Mammary epithelial cell (primary cell): ENCODE measurements at regions of chr6 and their contacts with region 1.

Region 1: DNA sequence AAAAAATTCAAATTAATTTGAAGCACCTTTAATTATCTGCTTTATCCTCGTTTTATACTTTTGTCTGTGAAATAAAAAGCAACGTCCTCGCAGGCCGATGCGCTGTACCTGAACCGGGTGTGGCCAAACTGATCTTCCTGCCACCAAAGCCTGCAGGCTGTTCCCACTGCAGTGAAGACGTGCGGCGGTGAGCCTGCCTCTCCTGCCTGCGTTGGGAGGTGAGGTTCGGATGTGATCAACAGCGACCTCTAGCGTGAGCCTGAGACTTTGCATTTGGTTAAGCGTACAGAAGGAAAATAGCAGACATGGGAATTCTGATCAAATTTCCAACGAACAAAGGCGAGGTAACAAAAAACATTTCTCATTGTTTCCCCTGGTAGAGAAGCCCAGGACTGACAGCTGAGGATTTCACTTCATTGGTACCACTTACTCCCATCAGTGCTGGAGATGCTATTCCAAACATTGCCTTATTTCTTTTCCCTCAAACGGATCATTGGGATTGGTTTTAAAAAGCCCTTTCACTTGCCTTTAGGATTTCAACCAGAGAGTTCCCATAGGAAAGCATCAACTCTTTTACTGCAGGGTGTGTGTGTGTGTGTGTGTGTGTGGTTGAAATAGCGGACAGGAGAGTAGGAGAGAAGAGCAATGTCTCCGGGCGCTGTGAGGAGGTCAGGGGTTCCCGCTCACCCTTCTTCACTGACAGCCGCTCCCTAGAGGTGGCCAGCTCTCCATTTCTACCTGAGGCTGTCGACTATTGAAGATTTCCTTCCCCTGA is 56.6 kb upstream of the CCN6 start:
- DNase-seq: peak; percentile 73
- H3K4me3 ChIP-seq: no peak overlapping the region
- H3K27ac ChIP-seq: no peak overlapping the region
- H3K4me1 ChIP-seq: peaks cover 30% of the 10 kb centered on the region
- H3K27me3 ChIP-seq: no peaks in the 10 kb centered on the region
- CTCF ChIP-seq: peak; percentile 86 to 89

Region 2: GRCh38 chr6:111047244-111047643 is 950.0 kb before region 1 on chr6:
- CTCF ChIA-PET with region 1: no interaction called
- dilution Hi-C with region 1: no loop called
- in situ Hi-C with region 1: no loop called
- intact Hi-C with region 1: no loop called
- DNase-seq: no peak
- H3K4me3 ChIP-seq: no peak overlapping the region
- H3K27ac ChIP-seq: no peak overlapping the region
- H3K4me1 ChIP-seq: no peaks in the 10 kb centered on the region
- H3K27me3 ChIP-seq: no peaks in the 10 kb centered on the region
- CTCF ChIP-seq: no peak

Region 3: DNA sequence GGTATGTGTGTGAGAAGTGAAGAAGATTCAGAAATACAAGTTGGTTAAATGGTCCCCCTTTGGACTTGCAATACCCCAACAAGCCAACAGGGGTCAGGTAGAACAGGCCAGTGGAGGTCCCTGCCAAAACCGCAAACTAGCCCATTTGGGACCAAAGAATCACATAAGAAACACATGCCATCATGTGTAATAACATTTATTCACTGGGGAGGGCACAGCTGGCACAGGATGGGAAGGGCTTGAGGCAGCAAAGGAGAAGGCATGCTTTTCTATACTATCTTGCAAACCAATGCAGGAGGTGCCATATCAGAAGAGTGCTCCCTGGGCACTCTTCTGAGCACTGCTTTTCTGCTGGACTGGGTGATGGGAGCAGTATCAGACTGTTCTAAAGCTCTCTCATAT is 275.5 kb before region 1 on chr6:
- CTCF ChIA-PET with region 1: no interaction called
- dilution Hi-C with region 1: no loop called
- in situ Hi-C with region 1: no loop called
- intact Hi-C with region 1: loop called (anchors 1 kb)
- DNase-seq: no peak
- H3K4me3 ChIP-seq: no peak overlapping the region
- H3K27ac ChIP-seq: no peak overlapping the region
- H3K4me1 ChIP-seq: peaks cover 6% of the 10 kb centered on the region
- H3K27me3 ChIP-seq: no peaks in the 10 kb centered on the region
- CTCF ChIP-seq: peak; percentile 65 to 72

Region 4: GRCh38 chr6:111861431-111861885 is 135.8 kb before region 1 on chr6:
- CTCF ChIA-PET with region 1: no interaction called
- dilution Hi-C with region 1: loop called (anchors 10 kb)
- in situ Hi-C with region 1: no loop called
- intact Hi-C with region 1: no loop called
- DNase-seq: no peak
- H3K4me3 ChIP-seq: no peak overlapping the region
- H3K27ac ChIP-seq: no peak overlapping the region
- H3K4me1 ChIP-seq: no peaks in the 10 kb centered on the region
- H3K27me3 ChIP-seq: no peaks in the 10 kb centered on the region
- CTCF ChIP-seq: no peak

Region 5: DNA sequence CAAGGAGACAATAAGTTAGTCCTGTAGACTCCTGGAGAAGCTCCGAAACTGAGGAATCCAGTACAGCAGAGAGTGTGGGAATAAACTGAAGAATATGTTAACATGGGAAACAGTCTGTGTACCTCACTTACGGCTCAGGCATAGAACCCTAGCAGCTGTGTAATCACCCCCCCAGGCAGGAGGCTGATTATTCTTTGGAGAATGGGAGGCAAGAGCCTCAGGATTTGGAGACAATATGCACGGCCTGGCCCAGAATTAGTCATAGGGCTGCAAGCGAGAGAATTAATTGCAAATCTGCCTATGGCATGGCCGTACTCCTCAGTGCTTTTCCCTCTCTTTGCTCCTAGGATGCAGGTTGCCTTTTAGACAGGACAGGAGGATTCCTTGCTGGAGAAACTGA is 96.5 kb before region 1 on chr6:
- CTCF ChIA-PET with region 1: no interaction called
- dilution Hi-C with region 1: loop called (anchors 5 kb)
- in situ Hi-C with region 1: no loop called
- intact Hi-C with region 1: no loop called
- DNase-seq: no peak
- H3K4me3 ChIP-seq: no peak overlapping the region
- H3K27ac ChIP-seq: no peak overlapping the region
- H3K4me1 ChIP-seq: no peaks in the 10 kb centered on the region
- H3K27me3 ChIP-seq: no peaks in the 10 kb centered on the region
- CTCF ChIP-seq: no peak

Region 6: GRCh38 chr6:111973118-111973761 is 24.0 kb before region 1 on chr6:
- CTCF ChIA-PET with region 1: no interaction called
- dilution Hi-C with region 1: no loop called
- in situ Hi-C with region 1: no loop called
- intact Hi-C with region 1: loop called (anchors 1 kb)
- DNase-seq: peak; percentile 93
- H3K4me3 ChIP-seq: peak overlapping the region in 2 of 3 experiments; percentile 8 to 19
- H3K27ac ChIP-seq: peak overlapping the region; percentile 99
- H3K4me1 ChIP-seq: peaks cover 31% of the 10 kb centered on the region
- H3K27me3 ChIP-seq: no peaks in the 10 kb centered on the region
- CTCF ChIP-seq: no peak

Region 7: DNA sequence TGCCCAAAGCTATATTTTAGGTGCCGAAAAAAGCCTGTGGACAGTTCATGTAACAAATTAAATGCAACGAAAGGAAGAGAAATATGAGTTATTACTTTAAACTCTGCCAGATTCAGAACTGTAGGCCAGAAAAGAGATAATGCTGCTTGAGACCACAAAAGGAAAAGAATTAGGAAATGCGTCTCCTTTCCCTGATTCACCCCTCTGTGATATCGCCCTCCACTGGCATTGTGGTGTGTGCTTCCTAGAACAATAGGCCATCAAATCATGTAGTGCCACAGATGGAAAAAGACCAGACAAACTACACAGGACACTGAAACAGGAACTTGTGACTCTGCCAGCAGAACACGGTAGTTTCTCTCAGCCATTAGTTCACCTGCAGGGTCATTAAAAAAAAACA is 271.8 kb after region 1 on chr6:
- CTCF ChIA-PET with region 1: no interaction called
- dilution Hi-C with region 1: no loop called
- in situ Hi-C with region 1: no loop called
- intact Hi-C with region 1: no loop called
- DNase-seq: no peak
- H3K4me3 ChIP-seq: no peak overlapping the region
- H3K27ac ChIP-seq: no peak overlapping the region
- H3K4me1 ChIP-seq: no peaks in the 10 kb centered on the region
- H3K27me3 ChIP-seq: no peaks in the 10 kb centered on the region
- CTCF ChIP-seq: peak; percentile 8 to 19

Region 8: GRCh38 chr6:112289038-112289566 is 291.8 kb after region 1 on chr6:
- CTCF ChIA-PET with region 1: no interaction called
- dilution Hi-C with region 1: no loop called
- in situ Hi-C with region 1: no loop called
- intact Hi-C with region 1: no loop called
- DNase-seq: no peak
- H3K4me3 ChIP-seq: no peak overlapping the region
- H3K27ac ChIP-seq: no peak overlapping the region
- H3K4me1 ChIP-seq: no peaks in the 10 kb centered on the region
- H3K27me3 ChIP-seq: no peaks in the 10 kb centered on the region
- CTCF ChIP-seq: no peak

Region 9: DNA sequence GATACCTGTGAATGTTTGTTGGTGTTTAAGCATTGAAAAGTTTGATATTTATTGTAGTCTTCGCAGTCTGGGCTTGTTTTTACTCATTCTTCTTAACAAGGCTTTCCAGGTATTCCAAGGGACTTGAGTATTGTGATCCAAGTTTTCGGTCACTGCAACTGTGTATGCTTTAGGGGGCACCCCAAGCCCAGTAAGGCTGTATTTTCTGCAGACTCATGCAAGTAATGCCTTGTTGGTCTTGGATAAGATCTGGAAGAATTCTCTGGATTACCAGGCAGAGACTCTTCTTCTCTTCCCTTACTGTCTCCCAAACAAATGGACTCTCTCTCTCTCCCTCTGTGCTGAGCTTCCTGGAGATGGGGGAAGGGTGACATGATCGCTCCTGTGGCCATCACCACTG is 432.0 kb after region 1 on chr6:
- CTCF ChIA-PET with region 1: no interaction called
- dilution Hi-C with region 1: no loop called
- in situ Hi-C with region 1: no loop called
- intact Hi-C with region 1: no loop called
- DNase-seq: peak; percentile 6
- H3K4me3 ChIP-seq: no peak overlapping the region
- H3K27ac ChIP-seq: no peak overlapping the region
- H3K4me1 ChIP-seq: no peaks in the 10 kb centered on the region
- H3K27me3 ChIP-seq: no peaks in the 10 kb centered on the region
- CTCF ChIP-seq: peak in 1 of 2 donors; percentile 12